Heart left ventricle (tissue), 16 donors: ENCODE measurements at regions of chr12 and their contacts with region 1.

Region 1: GRCh38 chr12:2239381-2239871 is 186.6 kb downstream of the CACNA1C start:
- DNase-seq: peak in 4 of 5 donors; percentile 72 to 84 (median 78)
- ATAC-seq: peak; percentile 59 to 75 (median 70)
- H3K4me3 ChIP-seq: peak overlapping the region in 4 of 12 donors; percentile 13 to 29 (median 18)
- H3K27ac ChIP-seq: peak overlapping the region; percentile 78 to 92 (median 86)
- H3K4me1 ChIP-seq: peaks cover 12 to 96% (median 59%) of the 10 kb centered on the region in 12 donors
- H3K27me3 ChIP-seq: no peaks in the 10 kb centered on the region
- CTCF ChIP-seq: no peak
- POLR2A ChIP-seq: peak in 1 of 2 donors; percentile 37

Region 2: DNA sequence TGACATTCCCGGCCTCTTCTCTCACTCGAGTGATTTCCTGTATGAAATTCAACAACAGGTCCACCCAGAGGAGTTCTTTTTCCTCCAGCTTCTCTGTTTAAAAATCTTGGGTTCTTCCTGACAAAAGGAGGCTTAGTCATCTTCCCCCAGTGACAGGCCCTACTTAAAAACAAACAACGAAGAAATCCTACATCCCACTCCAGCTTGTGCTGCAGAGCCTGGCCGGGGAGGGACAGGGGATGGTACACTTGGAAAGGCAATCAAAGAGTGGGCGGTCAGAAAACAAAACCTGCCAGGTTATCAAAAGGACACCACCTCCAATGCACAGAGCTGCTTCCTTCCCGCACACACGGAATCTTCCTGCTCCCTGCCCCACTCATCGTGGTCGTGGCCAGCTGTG is 85.4 kb before region 1 on chr12:
- intact Hi-C with region 1: loop called in 1 of 10 experiments (anchors 5 kb)
- DNase-seq: no peak
- ATAC-seq: peak in 3 of 4 donors; percentile 41 to 61 (median 50)
- H3K4me3 ChIP-seq: no peak overlapping the region
- H3K27ac ChIP-seq: peak overlapping the region in 11 of 12 donors; percentile 50 to 82 (median 73)
- H3K4me1 ChIP-seq: peaks cover 4 to 86% (median 58%) of the 10 kb centered on the region in 12 donors
- H3K27me3 ChIP-seq: no peaks in the 10 kb centered on the region
- CTCF ChIP-seq: no peak
- POLR2A ChIP-seq: no peak

Region 3: DNA sequence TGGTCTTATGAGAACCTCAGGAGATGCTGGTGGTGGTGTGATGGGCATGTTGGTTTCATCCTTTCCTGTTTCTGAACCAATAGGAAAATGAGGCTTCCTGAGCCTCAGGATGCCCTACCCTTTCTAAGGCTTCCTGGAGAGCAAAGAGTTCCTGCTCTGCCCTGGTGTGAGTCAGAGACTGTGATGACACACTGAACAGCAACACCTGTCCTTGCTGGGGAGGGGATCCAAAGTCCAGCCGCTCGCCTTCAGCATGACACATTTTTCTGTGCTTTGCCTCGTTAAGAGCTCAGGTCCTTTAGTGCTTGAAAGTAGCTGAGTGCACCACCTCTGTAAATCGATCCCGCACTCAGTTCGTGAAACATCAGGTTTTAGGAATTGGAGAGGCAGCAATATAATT is 70.6 kb before region 1 on chr12:
- intact Hi-C with region 1: loop called in 1 of 10 experiments (anchors 5 kb)
- DNase-seq: no peak
- ATAC-seq: peak in 1 of 4 donors; percentile 5
- H3K4me3 ChIP-seq: no peak overlapping the region
- H3K27ac ChIP-seq: peak overlapping the region in 3 of 12 donors; percentile 69 to 74 (median 72)
- H3K4me1 ChIP-seq: peaks cover 4 to 79% (median 54%) of the 10 kb centered on the region in 12 donors
- H3K27me3 ChIP-seq: no peaks in the 10 kb centered on the region
- CTCF ChIP-seq: no peak
- POLR2A ChIP-seq: no peak